AG04449 (cell line): ENCODE measurements at regions of chr7 and their contacts with region 1.

Region 1: DNA sequence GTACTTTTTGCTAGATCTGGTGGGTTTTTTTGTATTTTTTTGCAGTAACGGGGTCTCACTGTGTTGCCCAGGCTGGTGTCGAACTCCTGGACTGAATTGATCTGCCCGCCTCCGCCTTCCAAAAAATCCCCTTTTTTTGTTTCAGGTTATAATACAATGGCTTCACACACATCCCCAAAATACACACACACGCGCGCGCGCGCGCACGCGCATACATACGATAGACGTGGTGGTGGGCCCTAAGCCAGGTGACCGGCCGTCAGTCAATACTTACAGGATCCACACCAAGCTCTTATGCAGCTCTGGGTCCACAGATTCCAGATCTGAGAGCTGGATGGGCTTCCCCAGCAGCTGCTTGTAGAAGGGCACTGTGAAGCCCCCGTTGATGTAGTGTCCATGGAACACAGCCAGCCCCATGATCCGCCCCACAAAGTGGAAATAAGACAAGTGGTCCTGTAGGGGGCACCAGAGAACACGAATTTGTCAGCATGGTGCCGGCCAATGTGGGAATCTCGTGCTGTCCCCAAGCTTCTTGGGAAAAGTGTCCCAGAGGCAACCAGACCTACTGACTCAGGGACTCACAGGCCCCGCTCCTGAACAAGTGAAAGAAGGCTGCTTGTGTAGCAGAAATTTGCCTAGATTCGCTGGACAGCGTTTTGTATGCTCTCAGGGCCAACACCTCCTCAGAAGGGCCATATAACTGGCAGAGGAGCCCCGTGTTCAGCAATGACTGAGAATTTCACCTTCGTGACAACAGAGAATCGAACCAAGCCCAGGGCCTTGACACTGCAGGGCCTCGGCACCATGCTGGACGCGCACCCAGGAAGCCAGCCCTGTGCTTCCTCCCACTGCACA is 103.6 kb downstream of the SMURF1 start:
- DNase-seq: peak; percentile 24
- H3K4me3 ChIP-seq: no peak overlapping the region
- CTCF ChIP-seq: peak; percentile 67

Region 2: DNA sequence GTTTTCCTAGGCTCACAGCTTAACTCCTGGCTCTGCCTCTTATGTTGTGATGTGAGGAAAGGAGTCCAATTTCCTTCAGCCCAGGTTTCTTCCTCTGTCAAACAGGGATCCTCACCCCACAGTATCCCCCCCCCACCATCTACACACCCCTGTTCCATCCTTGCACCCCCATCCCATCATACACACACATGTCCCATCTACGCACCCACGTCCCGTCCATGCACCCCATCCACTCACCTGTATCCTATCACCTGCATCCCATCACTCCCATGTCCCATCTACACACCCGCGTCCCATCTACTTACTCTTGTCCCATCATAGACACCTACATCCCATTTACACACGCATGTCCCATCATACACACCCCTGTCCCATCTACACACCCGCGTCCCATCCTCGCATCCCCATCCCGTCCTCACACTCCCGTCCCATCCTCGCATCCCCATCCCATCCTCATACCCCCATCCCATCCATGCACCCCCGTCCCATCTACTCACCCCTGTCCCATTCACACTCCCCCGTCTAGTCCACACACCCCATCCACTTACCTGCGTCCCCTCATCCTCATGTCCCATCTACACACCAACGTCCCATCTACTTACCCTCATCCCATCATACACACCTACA is 44.7 kb before region 1 on chr7:
- CTCF ChIA-PET with region 1: no interaction called
- POLR2A ChIA-PET with region 1: no interaction called
- DNase-seq: no peak
- H3K4me3 ChIP-seq: no peak overlapping the region
- CTCF ChIP-seq: no peak

Region 3: DNA sequence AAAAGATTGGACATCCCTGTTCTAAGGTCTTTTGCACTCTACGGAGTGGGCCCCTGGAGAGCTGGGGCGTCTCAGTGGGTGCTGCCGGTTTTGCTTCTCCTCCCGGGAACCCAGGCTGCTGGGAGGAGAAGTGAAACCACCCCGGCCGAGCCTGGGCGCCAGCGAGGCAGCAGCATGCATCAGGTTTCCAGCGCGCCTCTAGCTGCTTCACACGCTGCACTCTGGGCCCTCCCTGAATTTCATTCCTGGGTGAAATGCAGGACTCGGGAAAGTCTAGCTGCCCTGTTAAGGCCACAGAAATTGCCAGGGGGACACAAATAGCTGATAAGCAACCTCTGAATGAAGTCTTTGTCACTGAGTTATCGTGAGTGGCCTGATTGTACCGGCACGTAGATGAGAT is 34.6 kb before region 1 on chr7:
- CTCF ChIA-PET with region 1: no interaction called
- POLR2A ChIA-PET with region 1: no interaction called
- DNase-seq: no peak
- H3K4me3 ChIP-seq: no peak overlapping the region
- CTCF ChIP-seq: no peak

Region 4: GRCh38 chr7:99029466-99030435 is 10.6 kb before region 1 on chr7:
- CTCF ChIA-PET with region 1: interaction called, 31 read pairs
- POLR2A ChIA-PET with region 1: no interaction called
- DNase-seq: no peak
- H3K4me3 ChIP-seq: no peak overlapping the region
- CTCF ChIP-seq: no peak

Region 5: DNA sequence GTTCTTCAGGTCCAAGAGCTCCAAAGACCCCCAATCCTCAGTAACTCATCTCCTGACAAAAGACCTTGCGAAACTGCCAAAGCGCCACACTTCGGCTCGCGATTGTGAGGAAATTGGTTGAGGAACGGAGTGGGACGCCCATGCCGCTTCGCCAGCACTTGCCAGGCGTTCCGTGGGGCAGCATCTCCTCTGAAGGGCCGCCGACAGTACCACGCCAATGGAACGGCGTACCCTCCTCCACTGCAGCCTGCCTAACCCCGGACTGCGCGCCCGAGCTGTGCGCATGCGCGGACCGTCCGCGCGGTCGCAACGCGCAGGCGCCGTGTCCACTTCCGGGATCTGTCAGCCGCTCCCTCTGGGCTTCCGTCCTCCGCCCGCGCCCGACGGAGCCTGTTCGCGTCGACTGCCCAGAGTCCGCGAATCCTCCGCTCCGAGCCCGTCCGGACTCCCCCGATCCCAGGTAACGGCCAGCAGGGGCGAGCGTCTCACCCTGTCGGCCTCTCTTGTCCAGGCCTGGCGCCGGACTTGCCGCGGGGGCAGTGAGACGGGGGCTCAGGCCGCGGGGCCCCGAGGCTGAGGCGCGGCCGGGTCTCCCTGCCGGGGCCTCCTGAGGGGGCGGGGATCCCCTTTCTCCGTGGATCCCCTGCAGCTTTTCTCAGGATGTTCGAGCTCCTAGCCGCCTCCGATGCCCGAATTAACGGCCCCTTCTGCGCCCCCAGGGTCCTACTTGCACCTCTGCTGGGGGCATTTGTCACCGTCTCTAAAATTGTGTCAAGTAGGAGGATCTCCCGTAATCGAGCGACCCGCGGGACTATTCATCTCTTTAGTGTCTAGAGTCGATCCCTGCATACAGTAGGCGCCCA is 285.4 kb after region 1 on chr7 and contains the start of gene ARPC1A:
- CTCF ChIA-PET with region 1: interaction called, 11 read pairs
- POLR2A ChIA-PET with region 1: no interaction called
- DNase-seq: peak; percentile 38
- H3K4me3 ChIP-seq: peak within 1 kb of the TSS; percentile 98
- CTCF ChIP-seq: peak; percentile 61